GM12878 (cell line): ENCODE measurements at regions of chr18 and their contacts with region 1.

Region 1: GRCh38 chr18:35290073-35290735 is at the start of gene ZSCAN30:
- DNase-seq: peak; percentile 86
- ATAC-seq: peak; percentile 97
- H3K4me3 ChIP-seq: peak within 1 kb of the TSS; percentile 83
- H3K27ac ChIP-seq: peak within 1 kb of the TSS; percentile 92
- H3K4me1 ChIP-seq: no peaks in the 10 kb centered on the region; the same call in 1 of the 2 replicates
- H3K27me3 ChIP-seq: no peaks in the 10 kb centered on the region
- CTCF ChIP-seq: no peak
- EP300 ChIP-seq: no peak
- POLR2A ChIP-seq: peak; percentile 97
- RAD21 ChIP-seq: no peak
- polyA plus RNA-seq, gene ZSCAN30: 2.7 to 3.2 TPM

Region 2: GRCh38 chr18:34401775-34402174 is 888.4 kb before region 1 on chr18:
- CTCF ChIA-PET with region 1: no interaction called
- POLR2A ChIA-PET with region 1: no interaction called
- RAD21 ChIA-PET with region 1: no interaction called
- SMC1A ChIA-PET with region 1: no interaction called
- in situ Hi-C with region 1: no loop called
- intact Hi-C with region 1: no loop called
- DNase-seq: no peak
- ATAC-seq: no peak
- H3K4me3 ChIP-seq: no peak overlapping the region
- H3K27ac ChIP-seq: no peak overlapping the region
- H3K4me1 ChIP-seq: no peaks in the 10 kb centered on the region
- H3K27me3 ChIP-seq: no peaks in the 10 kb centered on the region
- CTCF ChIP-seq: no peak
- EP300 ChIP-seq: no peak
- POLR2A ChIP-seq: no peak
- RAD21 ChIP-seq: no peak

Region 3: DNA sequence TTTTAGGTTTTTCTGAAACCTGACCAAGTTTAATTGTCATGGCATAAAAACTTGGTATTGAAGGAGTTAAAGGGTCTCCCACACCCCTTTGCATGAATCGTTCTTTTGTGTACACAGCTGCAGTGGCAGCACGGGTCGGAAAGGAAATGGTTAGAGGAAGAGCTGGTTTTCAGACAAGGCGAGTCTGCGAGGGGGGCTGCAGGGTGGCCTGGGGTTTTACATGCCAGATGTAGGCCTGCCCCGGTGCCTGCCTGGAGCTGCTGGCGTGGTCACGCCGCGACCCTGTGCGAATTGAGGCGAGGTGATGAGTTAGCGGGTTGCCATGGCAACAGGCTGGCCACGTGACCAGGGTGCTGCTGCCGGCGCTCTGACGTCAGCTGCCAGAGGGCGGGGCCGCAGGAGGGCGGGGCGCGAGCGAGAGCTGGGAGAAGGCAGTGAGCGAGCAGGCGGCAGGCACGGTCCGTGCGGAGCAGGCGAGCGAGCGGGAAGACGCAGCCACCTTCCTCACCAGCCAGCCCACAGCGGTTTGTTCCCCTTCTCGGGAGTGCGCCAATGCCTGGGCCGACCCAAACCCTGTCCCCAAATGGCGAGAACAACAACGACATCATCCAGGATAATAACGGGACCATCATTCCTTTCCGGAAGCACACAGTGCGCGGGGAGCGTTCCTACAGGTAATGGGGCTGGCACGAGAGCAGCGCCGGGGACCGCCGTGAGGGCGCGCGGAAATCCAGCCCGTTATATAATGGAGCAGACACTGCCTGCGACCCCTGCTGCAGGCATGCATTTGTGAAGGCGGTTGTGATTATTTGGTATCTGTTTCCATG is 249.0 kb before region 1 on chr18 and contains the start of gene MAPRE2:
- CTCF ChIA-PET with region 1: no interaction called
- POLR2A ChIA-PET with region 1: interaction called, 3 read pairs
- RAD21 ChIA-PET with region 1: no interaction called
- SMC1A ChIA-PET with region 1: no interaction called
- in situ Hi-C with region 1: no loop called
- intact Hi-C with region 1: loop called (anchors 5 kb)
- DNase-seq: peak; percentile 82
- ATAC-seq: peak; percentile 84
- H3K4me3 ChIP-seq: peak within 1 kb of the TSS; percentile 78
- H3K27ac ChIP-seq: peak within 1 kb of the TSS; percentile 66
- H3K4me1 ChIP-seq: peaks cover 12% of the 10 kb centered on the region; the same call in 1 of the 2 replicates
- H3K27me3 ChIP-seq: no peaks in the 10 kb centered on the region
- CTCF ChIP-seq: no peak
- EP300 ChIP-seq: peak in 1 of 2 experiments; percentile 43; a peak in 2 of 4 replicates
- POLR2A ChIP-seq: peak; percentile 99
- RAD21 ChIP-seq: no peak
- polyA plus RNA-seq, gene MAPRE2: 11.0 to 16.3 TPM

Region 4: DNA sequence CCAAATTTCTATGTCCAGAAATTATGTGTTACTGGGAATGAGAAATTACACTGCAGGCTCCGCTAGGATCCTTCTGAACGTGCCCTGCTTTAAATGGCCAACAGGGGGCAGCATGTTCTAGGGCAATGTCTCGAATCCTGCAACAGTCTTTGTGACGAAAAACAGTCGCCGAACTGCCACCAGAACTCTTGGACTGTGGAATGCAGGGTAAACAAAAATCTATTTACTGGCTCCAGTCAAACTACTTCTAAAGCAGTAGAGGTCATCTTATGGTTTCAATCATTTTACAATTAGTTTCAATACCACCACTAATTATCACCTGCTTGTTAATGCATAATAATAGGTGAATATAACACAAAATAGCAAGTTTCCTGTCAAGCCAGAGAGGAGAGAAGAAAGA is 59.2 kb before region 1 on chr18:
- CTCF ChIA-PET with region 1: interaction called, 4 read pairs
- POLR2A ChIA-PET with region 1: no interaction called
- RAD21 ChIA-PET with region 1: no interaction called
- SMC1A ChIA-PET with region 1: interaction called, 11 read pairs
- in situ Hi-C with region 1: no loop called
- intact Hi-C with region 1: no loop called
- DNase-seq: peak; percentile 33
- ATAC-seq: peak; percentile 95
- H3K4me3 ChIP-seq: peak overlapping the region; percentile 37; the same call in 1 of the 2 replicates
- H3K27ac ChIP-seq: no peak overlapping the region
- H3K4me1 ChIP-seq: no peaks in the 10 kb centered on the region
- H3K27me3 ChIP-seq: no peaks in the 10 kb centered on the region
- CTCF ChIP-seq: peak; percentile 89 to 95 (median 89)
- EP300 ChIP-seq: no peak
- POLR2A ChIP-seq: no peak
- RAD21 ChIP-seq: peak; percentile 96

Region 5: GRCh38 chr18:35343936-35344735 is 53.9 kb after region 1 on chr18 and contains the start of gene ZNF24:
- CTCF ChIA-PET with region 1: interaction called, 6 read pairs
- POLR2A ChIA-PET with region 1: interaction called, 13 read pairs
- RAD21 ChIA-PET with region 1: interaction called, 5 read pairs
- SMC1A ChIA-PET with region 1: interaction called, 9 read pairs
- in situ Hi-C with region 1: loop called (anchors 5 kb)
- intact Hi-C with region 1: loop called (anchors 5 kb)
- DNase-seq: peak; percentile 61
- ATAC-seq: peak; percentile 95
- H3K4me3 ChIP-seq: peak within 1 kb of the TSS; percentile 82
- H3K27ac ChIP-seq: peak within 1 kb of the TSS; percentile 98
- H3K4me1 ChIP-seq: peaks cover 7% of the 10 kb centered on the region; the same call in 1 of the 2 replicates
- H3K27me3 ChIP-seq: no peaks in the 10 kb centered on the region
- CTCF ChIP-seq: no peak
- EP300 ChIP-seq: 0 out of 4 replicates have a peak, but pooled peaks of 1 of the 2 experiments have one; percentile 21
- POLR2A ChIP-seq: peak; percentile 91
- RAD21 ChIP-seq: no peak
- polyA plus RNA-seq, gene ZNF24: 19.3 to 41.6 TPM